CD4-positive, alpha-beta T cell (primary cell): ENCODE measurements at regions of chr1 and their contacts with region 1.

Region 1: GRCh38 chr1:36149237-36149972 is at the start of gene TRAPPC3:
- DNase-seq: peak; percentile 98 to 100 (median 99)
- ATAC-seq: peak; percentile 88
- H3K4me3 ChIP-seq: peak within 1 kb of the TSS; percentile 81
- H3K4me3 Mint-ChIP-seq: peak within 1 kb of the TSS; percentile 98
- H3K27ac ChIP-seq: peak within 1 kb of the TSS; percentile 92 to 95
- H3K27ac Mint-ChIP-seq: peak within 1 kb of the TSS; percentile 95
- H3K4me1 ChIP-seq: peaks cover 65% of the 10 kb centered on the region
- H3K4me1 Mint-ChIP-seq: peaks cover 73% of the 10 kb centered on the region
- H3K27me3 ChIP-seq: no peaks in the 10 kb centered on the region
- H3K27me3 Mint-ChIP-seq: no peaks in the 10 kb centered on the region
- CTCF ChIP-seq: peak; percentile 84
- total RNA-seq, gene TRAPPC3: 18.4 to 21.3 TPM

Region 2: DNA sequence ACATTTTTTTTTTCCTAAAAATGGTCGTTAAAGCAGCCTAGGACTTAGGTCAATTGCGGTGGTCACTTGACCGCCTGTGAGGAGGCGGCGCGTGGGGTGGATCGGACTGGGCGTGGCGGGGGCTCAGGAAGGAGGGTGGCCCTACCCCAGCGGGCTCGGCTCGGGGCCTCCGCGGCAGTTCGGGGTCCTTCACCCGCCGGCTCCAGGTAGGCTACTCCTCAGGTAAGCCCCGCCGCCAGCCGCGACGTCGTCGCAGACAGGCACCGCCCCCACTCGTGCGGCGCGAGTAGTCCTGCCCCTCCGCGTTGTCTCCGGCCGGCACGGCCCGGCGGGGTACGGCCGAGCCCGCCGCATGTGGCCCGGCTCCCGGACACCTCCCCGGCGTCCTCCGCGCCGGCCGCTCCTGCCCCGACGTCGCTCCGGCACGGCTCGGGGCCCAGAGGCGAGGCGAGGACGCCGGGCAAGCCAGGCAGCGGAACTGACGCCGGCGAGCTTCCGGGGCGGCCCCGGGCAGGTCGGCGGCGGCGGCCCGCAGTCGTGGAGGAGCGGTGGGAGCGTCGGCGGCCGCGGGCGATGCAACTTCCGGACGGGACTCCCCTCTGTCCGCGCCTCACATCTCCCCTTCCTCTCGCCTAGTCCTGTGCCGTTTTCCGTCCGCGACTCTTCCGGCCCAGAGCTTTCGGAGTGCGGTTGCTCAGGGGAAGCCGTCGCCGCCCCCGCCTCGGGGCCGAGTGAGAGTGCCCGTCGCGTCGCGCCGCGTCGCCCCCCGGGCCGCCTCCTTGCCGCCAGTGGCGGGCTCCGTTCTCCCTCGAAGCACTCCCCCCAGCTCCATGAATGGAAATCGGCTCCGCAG is 218.6 kb before region 1 on chr1 and contains the start of gene AGO3:
- CTCF ChIA-PET with region 1: interaction called, 4 read pairs
- POLR2A ChIA-PET with region 1: interaction called, 6 read pairs
- intact Hi-C with region 1: loop called in 1 of 2 experiments (anchors 5 kb)
- DNase-seq: peak; percentile 73 to 96 (median 80)
- ATAC-seq: peak; percentile 79
- H3K4me3 ChIP-seq: peak within 1 kb of the TSS; percentile 78
- H3K4me3 Mint-ChIP-seq: peak within 1 kb of the TSS; percentile 94
- H3K27ac ChIP-seq: peak within 1 kb of the TSS; percentile 91 to 97
- H3K27ac Mint-ChIP-seq: peak within 1 kb of the TSS; percentile 96
- H3K4me1 ChIP-seq: peaks cover 19% of the 10 kb centered on the region
- H3K4me1 Mint-ChIP-seq: peaks cover 44% of the 10 kb centered on the region
- H3K27me3 ChIP-seq: no peaks in the 10 kb centered on the region
- H3K27me3 Mint-ChIP-seq: no peaks in the 10 kb centered on the region
- CTCF ChIP-seq: no peak
- total RNA-seq, gene AGO3: 31.3 to 34.5 TPM

Region 3: GRCh38 chr1:36023098-36023769 is 126.2 kb before region 1 on chr1:
- CTCF ChIA-PET with region 1: no interaction called
- POLR2A ChIA-PET with region 1: no interaction called
- intact Hi-C with region 1: no loop called
- DNase-seq: peak in 2 of 14 experiments; percentile 5 to 19
- ATAC-seq: no peak
- H3K4me3 ChIP-seq: no peak overlapping the region
- H3K4me3 Mint-ChIP-seq: no peak overlapping the region
- H3K27ac ChIP-seq: no peak overlapping the region
- H3K27ac Mint-ChIP-seq: peak overlapping the region; percentile 58
- H3K4me1 ChIP-seq: no peaks in the 10 kb centered on the region
- H3K4me1 Mint-ChIP-seq: no peaks in the 10 kb centered on the region
- H3K27me3 ChIP-seq: no peaks in the 10 kb centered on the region
- H3K27me3 Mint-ChIP-seq: no peaks in the 10 kb centered on the region
- CTCF ChIP-seq: no peak

Region 4: DNA sequence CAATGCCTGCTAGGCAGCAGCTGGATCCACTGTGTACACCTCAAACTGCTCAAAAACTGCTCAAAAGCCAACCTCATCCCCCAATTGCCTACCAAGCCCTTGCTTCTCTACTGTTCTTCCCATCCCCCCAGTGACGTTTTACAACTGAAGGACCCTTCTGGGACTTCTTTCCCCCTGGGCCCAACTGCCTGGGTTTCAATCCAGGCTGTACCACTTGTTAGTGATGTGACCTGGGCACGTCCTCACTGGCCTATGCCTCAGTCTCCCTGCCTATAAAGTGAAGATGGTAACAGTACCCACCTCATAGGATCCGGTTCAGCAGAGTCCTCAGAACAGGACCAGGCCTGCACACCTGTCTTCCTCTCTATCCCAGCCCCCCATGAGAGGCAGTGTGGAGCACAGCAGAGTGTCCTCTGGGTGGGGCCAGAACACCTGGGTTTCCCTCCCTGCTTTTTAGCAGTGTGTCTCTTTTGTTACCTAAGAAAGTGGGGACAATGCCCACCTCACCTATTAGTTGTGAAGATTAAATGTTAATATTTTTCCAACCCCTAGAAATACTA is 67.4 kb before region 1 on chr1:
- CTCF ChIA-PET with region 1: no interaction called
- POLR2A ChIA-PET with region 1: no interaction called
- intact Hi-C with region 1: no loop called
- DNase-seq: no peak
- ATAC-seq: no peak
- H3K4me3 ChIP-seq: no peak overlapping the region
- H3K4me3 Mint-ChIP-seq: no peak overlapping the region
- H3K27ac ChIP-seq: no peak overlapping the region
- H3K27ac Mint-ChIP-seq: no peak overlapping the region
- H3K4me1 ChIP-seq: peaks cover 9% of the 10 kb centered on the region
- H3K4me1 Mint-ChIP-seq: no peaks in the 10 kb centered on the region
- H3K27me3 ChIP-seq: peaks cover 21 to 29% of the 10 kb centered on the region in 2 experiments
- H3K27me3 Mint-ChIP-seq: peaks cover 55% of the 10 kb centered on the region
- CTCF ChIP-seq: no peak

Region 5: DNA sequence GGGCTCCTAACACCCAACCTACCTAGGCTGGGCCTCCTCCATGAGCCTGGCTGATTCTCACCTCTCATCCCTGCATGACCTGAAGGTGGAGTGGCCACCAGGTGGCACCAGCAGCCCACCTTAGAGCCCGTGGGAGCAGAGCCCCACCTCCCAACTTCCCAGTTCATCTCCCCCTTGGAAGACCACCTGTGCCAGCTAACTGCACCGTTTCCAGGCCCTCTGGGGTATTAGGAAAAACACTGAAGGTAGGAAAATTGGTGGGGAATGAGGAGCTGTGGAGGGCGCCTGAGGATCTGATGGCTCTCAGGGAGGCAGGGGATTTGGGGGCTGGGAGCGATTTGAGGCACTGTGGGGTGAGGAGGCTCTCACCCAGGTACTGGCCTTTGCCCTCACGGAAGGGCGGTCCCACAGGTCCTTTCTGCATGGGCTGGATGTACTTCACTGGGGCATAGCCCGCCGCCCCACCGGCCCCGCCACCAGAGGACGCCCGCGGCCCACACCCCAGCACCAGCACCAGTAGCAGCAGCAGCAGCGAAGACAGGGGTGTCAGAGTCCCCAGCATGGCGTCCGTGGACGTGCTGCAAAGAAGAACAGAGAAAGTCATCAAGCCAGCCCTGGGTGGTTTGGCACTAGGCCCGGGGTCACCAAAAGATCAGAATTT is 49.6 kb before region 1 on chr1:
- CTCF ChIA-PET with region 1: interaction called, 10 read pairs
- POLR2A ChIA-PET with region 1: no interaction called
- intact Hi-C with region 1: loop called (anchors 2 kb)
- DNase-seq: peak; percentile 61 to 84 (median 71)
- ATAC-seq: peak; percentile 89
- H3K4me3 ChIP-seq: no peak overlapping the region
- H3K4me3 Mint-ChIP-seq: no peak overlapping the region
- H3K27ac ChIP-seq: no peak overlapping the region
- H3K27ac Mint-ChIP-seq: no peak overlapping the region
- H3K4me1 ChIP-seq: peaks cover 12% of the 10 kb centered on the region
- H3K4me1 Mint-ChIP-seq: no peaks in the 10 kb centered on the region
- H3K27me3 ChIP-seq: no peaks in the 10 kb centered on the region
- H3K27me3 Mint-ChIP-seq: no peaks in the 10 kb centered on the region
- CTCF ChIP-seq: peak; percentile 91

Region 6: DNA sequence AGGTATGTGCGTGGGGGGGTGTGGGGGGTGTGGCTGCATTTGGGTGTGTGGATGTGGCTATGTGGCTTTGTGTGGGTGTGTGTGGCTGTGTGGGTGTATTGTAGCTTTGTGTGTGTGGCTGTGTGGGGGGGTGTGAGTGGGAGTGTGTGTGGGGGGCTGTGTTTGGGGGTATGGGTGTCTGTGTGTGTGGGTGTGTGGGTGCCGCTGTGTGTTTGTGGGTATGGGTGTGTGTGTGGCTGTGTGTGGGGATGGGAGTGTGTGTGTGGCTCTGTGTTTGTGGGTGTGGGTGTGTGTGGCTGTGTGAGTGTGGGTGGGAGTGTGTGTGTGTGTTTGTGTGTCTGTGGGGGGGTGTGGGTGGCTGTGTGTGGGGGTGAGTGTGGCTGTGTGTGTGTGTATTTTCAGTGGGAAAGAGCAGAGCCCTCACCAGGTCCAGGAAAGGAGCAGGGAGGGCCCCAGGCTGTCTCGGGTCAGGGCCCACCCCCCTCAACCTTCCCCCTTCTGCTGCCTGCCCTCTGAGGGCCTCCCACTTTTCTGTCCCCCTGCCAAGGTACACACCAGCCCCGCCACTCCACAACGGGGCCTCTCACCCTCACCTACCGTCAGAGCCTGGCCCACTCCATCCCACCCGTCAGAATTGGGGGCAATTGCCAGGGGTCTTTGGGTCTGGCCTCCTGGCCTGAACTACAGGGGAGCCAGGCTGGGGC is 22.5 kb before region 1 on chr1:
- CTCF ChIA-PET with region 1: no interaction called
- POLR2A ChIA-PET with region 1: no interaction called
- intact Hi-C with region 1: no loop called
- DNase-seq: no peak
- ATAC-seq: no peak
- H3K4me3 ChIP-seq: no peak overlapping the region
- H3K4me3 Mint-ChIP-seq: no peak overlapping the region
- H3K27ac ChIP-seq: no peak overlapping the region
- H3K27ac Mint-ChIP-seq: no peak overlapping the region
- H3K4me1 ChIP-seq: peaks cover 16% of the 10 kb centered on the region
- H3K4me1 Mint-ChIP-seq: peaks cover 27% of the 10 kb centered on the region
- H3K27me3 ChIP-seq: peaks cover 17 to 24% of the 10 kb centered on the region in 2 experiments
- H3K27me3 Mint-ChIP-seq: peaks cover 39% of the 10 kb centered on the region
- CTCF ChIP-seq: no peak

Region 7: GRCh38 chr1:36160949-36161485 is 11.6 kb after region 1 on chr1:
- CTCF ChIA-PET with region 1: interaction called, 74 read pairs
- POLR2A ChIA-PET with region 1: interaction called, 194 read pairs
- intact Hi-C with region 1: loop called in 1 of 2 experiments (anchors 1 kb)
- DNase-seq: peak; percentile 41 to 85 (median 64)
- ATAC-seq: peak; percentile 25
- H3K4me3 ChIP-seq: peak overlapping the region; percentile 61
- H3K4me3 Mint-ChIP-seq: peak overlapping the region; percentile 88
- H3K27ac ChIP-seq: peak overlapping the region; percentile 91 to 93
- H3K27ac Mint-ChIP-seq: peak overlapping the region; percentile 97
- H3K4me1 ChIP-seq: peaks cover 79% of the 10 kb centered on the region
- H3K4me1 Mint-ChIP-seq: peaks cover 72% of the 10 kb centered on the region
- H3K27me3 ChIP-seq: no peaks in the 10 kb centered on the region
- H3K27me3 Mint-ChIP-seq: no peaks in the 10 kb centered on the region
- CTCF ChIP-seq: no peak

Region 8: DNA sequence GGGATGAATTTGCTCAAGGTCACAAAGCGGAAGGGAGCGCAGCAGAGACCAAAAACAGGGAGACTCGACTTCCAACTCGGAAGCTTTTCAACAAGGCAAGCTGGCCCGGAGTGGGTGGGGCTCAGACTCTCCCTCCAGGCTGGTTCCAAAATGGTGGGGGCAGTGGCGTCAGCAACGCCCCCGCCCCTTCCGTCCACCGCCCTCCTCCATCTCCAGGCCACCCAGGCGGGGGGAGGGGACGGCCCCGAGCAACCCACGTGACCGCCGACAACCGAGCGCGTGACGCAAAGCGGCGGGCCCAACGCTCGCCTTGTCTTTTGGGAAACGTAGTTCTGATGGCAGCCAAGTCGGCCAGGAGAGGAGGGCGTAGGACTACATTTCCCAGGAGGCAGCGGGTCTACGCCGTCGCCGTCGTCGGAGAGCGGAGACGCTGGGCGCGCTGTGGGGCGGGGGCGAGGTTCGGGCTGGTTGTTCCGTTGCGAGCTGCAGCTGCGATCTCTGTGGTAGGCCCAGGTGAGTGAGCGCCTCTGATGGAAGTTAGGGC is 74.7 kb after region 1 on chr1 and contains the start of gene THRAP3:
- CTCF ChIA-PET with region 1: interaction called, 37 read pairs
- POLR2A ChIA-PET with region 1: interaction called, 82 read pairs
- intact Hi-C with region 1: loop called (anchors 1 kb)
- DNase-seq: peak; percentile 98 to 100 (median 99)
- ATAC-seq: peak; percentile 85
- H3K4me3 ChIP-seq: peak within 1 kb of the TSS; percentile 80
- H3K4me3 Mint-ChIP-seq: peak within 1 kb of the TSS; percentile 97
- H3K27ac ChIP-seq: peak within 1 kb of the TSS; percentile 97 to 99
- H3K27ac Mint-ChIP-seq: peak within 1 kb of the TSS; percentile 97
- H3K4me1 ChIP-seq: peaks cover 47% of the 10 kb centered on the region
- H3K4me1 Mint-ChIP-seq: peaks cover 33% of the 10 kb centered on the region
- H3K27me3 ChIP-seq: no peaks in the 10 kb centered on the region
- H3K27me3 Mint-ChIP-seq: no peaks in the 10 kb centered on the region
- CTCF ChIP-seq: no peak
- total RNA-seq, gene THRAP3: 68.7 to 76.1 TPM

Region 9: GRCh38 chr1:36300526-36300925 is 151.1 kb after region 1 on chr1:
- CTCF ChIA-PET with region 1: interaction called, 9 read pairs
- POLR2A ChIA-PET with region 1: interaction called, 5 read pairs
- intact Hi-C with region 1: loop called in 1 of 2 experiments (anchors 5 kb)
- DNase-seq: peak in 2 of 14 experiments; percentile 43 to 58
- ATAC-seq: peak; percentile 15
- H3K4me3 ChIP-seq: no peak overlapping the region
- H3K4me3 Mint-ChIP-seq: no peak overlapping the region
- H3K27ac ChIP-seq: peak overlapping the region in 1 of 2 donors; percentile 17
- H3K27ac Mint-ChIP-seq: peak overlapping the region; percentile 28
- H3K4me1 ChIP-seq: peaks cover 2% of the 10 kb centered on the region
- H3K4me1 Mint-ChIP-seq: peaks cover 6% of the 10 kb centered on the region
- H3K27me3 ChIP-seq: no peaks in the 10 kb centered on the region
- H3K27me3 Mint-ChIP-seq: no peaks in the 10 kb centered on the region
- CTCF ChIP-seq: no peak

Region 10: DNA sequence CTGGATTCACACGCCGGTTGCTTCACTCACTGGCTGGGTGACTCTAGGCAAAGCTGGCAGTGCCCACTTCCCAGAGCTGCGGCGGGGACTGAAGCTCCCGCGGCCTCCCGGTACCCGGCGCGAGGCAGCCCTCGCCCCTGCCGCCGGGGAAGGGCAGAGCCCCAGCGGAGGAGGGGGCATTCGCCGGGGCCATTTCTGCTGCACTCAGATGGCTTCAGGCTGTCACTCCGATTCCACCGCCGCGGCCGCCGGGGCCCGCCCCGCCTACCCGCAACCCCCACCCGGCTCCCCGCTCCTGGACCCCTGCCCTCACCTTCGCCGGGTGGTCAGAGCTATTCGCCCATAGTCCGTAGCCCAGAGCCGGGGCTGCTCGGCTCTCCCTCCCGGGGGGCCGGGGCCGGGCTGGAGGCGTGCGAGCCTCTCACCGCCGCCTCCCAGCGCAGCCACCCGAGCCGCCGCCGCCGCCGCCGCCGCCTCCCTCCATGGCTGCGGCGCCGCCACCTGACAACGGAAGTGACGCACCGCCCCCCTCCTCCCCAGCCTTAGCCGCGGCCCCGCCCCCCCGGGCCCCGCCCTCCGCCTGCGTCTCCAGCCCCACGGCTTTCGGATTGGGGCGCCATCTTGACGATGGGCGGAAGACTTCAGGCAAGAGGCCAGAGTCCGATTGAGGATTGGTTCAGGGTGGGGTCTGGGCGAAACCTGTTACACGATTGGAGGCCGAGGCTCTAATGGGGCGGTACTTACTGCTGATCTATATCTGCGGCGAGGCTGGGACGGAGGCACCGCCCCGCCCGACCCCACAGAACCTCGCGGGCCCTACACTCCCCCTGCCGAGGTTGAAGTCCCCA is 236.2 kb after region 1 on chr1 and contains the start of gene STK40:
- CTCF ChIA-PET with region 1: interaction called, 7 read pairs
- POLR2A ChIA-PET with region 1: interaction called, 6 read pairs
- intact Hi-C with region 1: loop called in 1 of 2 experiments (anchors 5 kb)
- DNase-seq: peak; percentile 97 to 99 (median 98)
- ATAC-seq: peak; percentile 84
- H3K4me3 ChIP-seq: peak within 1 kb of the TSS; percentile 72
- H3K4me3 Mint-ChIP-seq: peak within 1 kb of the TSS; percentile 89
- H3K27ac ChIP-seq: peak within 1 kb of the TSS; percentile 92
- H3K27ac Mint-ChIP-seq: peak within 1 kb of the TSS; percentile 98
- H3K4me1 ChIP-seq: peaks cover 56% of the 10 kb centered on the region
- H3K4me1 Mint-ChIP-seq: peaks cover 59% of the 10 kb centered on the region
- H3K27me3 ChIP-seq: no peaks in the 10 kb centered on the region
- H3K27me3 Mint-ChIP-seq: no peaks in the 10 kb centered on the region
- CTCF ChIP-seq: no peak
- total RNA-seq, gene STK40: 17.8 to 20.7 TPM